ENCODE measurements at regions of chr19 and their contacts with region 1.

Region 1: GRCh38 chr19:38049105-38049649 is 142.2 kb downstream of the SIPA1L3 start:
- DNase-seq: peak; percentile 85
- ATAC-seq: peak; percentile 35
- H3K4me3 ChIP-seq: peak overlapping the region in 4 of 5 experiments; percentile 2 to 39 (median 26)
- H3K4me3 Mint-ChIP-seq: peak overlapping the region; percentile 77
- H3K27ac ChIP-seq: peak overlapping the region; percentile 97
- H3K27ac Mint-ChIP-seq: peak overlapping the region; percentile 96
- H3K4me1 ChIP-seq: peaks cover 52 to 68% of the 10 kb centered on the region in 2 donors
- H3K4me1 Mint-ChIP-seq: peaks cover 75% of the 10 kb centered on the region
- H3K27me3 ChIP-seq: no peaks in the 10 kb centered on the region
- H3K27me3 Mint-ChIP-seq: no peaks in the 10 kb centered on the region
- CTCF ChIP-seq: no peak

Region 2: GRCh38 chr19:37931881-37932655 is 117.1 kb before region 1 on chr19:
- CTCF ChIA-PET with region 1: interaction called, 10 read pairs
- POLR2A ChIA-PET with region 1: interaction called, 10 read pairs
- intact Hi-C with region 1: loop called (anchors 1 kb)
- DNase-seq: peak; percentile 72
- ATAC-seq: peak; percentile 6
- H3K4me3 ChIP-seq: peak overlapping the region; percentile 21 to 63 (median 55)
- H3K4me3 Mint-ChIP-seq: peak overlapping the region; percentile 85
- H3K27ac ChIP-seq: peak overlapping the region; percentile 78 to 85
- H3K27ac Mint-ChIP-seq: peak overlapping the region; percentile 87
- H3K4me1 ChIP-seq: peaks cover 86 to 95% of the 10 kb centered on the region in 2 donors
- H3K4me1 Mint-ChIP-seq: peaks cover 90% of the 10 kb centered on the region
- H3K27me3 ChIP-seq: no peaks in the 10 kb centered on the region
- H3K27me3 Mint-ChIP-seq: no peaks in the 10 kb centered on the region
- CTCF ChIP-seq: no peak

Region 3: DNA sequence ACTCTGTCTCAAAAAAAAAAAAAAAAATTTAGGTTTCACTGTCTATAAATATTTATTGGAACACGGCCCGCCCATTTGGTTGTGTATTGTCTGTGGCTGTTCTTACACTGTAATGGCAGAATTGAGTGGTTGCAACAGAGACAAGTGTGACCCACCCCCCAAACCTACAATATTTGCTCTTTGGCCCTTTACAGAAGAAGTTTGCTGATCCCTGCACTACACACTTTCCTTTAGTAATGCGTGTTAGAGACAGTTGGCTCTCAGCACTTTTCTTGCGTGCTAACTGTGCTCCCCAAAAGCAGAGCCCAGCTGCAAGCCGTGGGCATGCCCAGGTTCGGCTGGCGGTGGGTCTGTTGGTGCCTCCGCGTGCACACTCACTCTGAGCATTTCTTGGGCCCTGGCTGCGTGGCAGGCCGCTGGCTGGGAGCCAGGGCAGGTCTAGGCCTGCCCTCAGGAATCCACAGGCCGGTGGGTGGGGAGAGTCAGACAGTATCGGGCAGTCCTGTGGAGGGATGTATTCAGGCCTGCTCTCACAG is 69.6 kb before region 1 on chr19:
- CTCF ChIA-PET with region 1: interaction called, 27 read pairs
- POLR2A ChIA-PET with region 1: interaction called, 22 read pairs
- intact Hi-C with region 1: loop called (anchors 1 kb)
- DNase-seq: peak; percentile 66
- ATAC-seq: no peak
- H3K4me3 ChIP-seq: peak overlapping the region in 2 of 5 experiments; percentile 19 to 45
- H3K4me3 Mint-ChIP-seq: peak overlapping the region; percentile 65
- H3K27ac ChIP-seq: peak overlapping the region; percentile 89 to 92
- H3K27ac Mint-ChIP-seq: peak overlapping the region; percentile 94
- H3K4me1 ChIP-seq: peaks cover 79 to 99% of the 10 kb centered on the region in 2 donors
- H3K4me1 Mint-ChIP-seq: peaks cover 87% of the 10 kb centered on the region
- H3K27me3 ChIP-seq: no peaks in the 10 kb centered on the region
- H3K27me3 Mint-ChIP-seq: no peaks in the 10 kb centered on the region
- CTCF ChIP-seq: no peak

Region 4: GRCh38 chr19:38033658-38034498 is 15.3 kb before region 1 on chr19:
- CTCF ChIA-PET with region 1: interaction called, 109 read pairs
- POLR2A ChIA-PET with region 1: interaction called, 91 read pairs
- intact Hi-C with region 1: loop called (anchors 1 kb)
- DNase-seq: peak; percentile 93
- ATAC-seq: peak; percentile 79
- H3K4me3 ChIP-seq: peak overlapping the region in 3 of 5 experiments; percentile 16 to 43 (median 36)
- H3K4me3 Mint-ChIP-seq: peak overlapping the region; percentile 86
- H3K27ac ChIP-seq: peak overlapping the region; percentile 84 to 93
- H3K27ac Mint-ChIP-seq: peak overlapping the region; percentile 99
- H3K4me1 ChIP-seq: peaks cover 63 to 87% of the 10 kb centered on the region in 2 donors
- H3K4me1 Mint-ChIP-seq: peaks cover 81% of the 10 kb centered on the region
- H3K27me3 ChIP-seq: no peaks in the 10 kb centered on the region
- H3K27me3 Mint-ChIP-seq: no peaks in the 10 kb centered on the region
- CTCF ChIP-seq: peak; percentile 65

Region 5: DNA sequence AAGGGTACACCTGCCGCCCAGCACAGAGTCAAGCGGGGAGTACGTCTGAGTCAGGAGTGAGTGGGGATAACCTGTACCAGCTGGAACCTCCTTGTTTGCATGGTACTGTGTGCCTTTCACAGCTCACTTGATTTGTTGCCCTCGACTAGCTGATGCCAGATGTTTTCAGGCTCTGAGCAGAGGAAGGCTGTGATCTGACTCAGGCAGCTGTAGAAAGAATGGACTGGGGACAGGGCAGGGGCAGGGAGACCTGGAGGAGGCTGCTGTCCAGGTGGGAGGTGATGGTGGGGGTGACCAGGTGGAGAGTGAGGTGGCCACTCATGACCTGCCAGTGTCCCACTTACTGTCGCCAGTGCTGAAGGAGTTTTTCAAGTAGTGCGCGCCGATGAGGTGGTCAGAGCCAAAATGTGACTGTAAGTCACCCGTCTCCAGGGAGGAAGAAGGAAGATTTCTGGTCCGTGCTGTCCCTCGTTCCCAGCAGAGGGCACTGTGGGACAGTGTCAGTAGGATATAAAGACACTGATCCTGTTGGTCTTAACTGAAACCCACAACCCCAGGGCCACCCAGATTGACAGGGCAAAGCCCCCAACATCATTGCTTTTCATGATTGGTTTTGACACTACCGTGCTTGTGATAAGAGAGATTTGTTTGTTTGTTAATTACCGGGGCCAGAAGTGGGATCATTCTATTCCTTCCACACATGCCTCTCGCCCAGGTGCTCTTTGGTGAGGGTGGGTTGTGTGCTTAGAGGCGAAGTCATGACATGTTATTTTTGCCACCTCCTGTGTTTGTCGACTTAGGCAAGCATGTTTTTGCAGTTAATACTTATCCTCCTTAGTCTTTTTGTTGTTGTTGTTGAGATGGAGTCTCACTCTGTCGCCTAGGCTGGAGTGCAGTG is 46.5 kb after region 1 on chr19:
- CTCF ChIA-PET with region 1: interaction called, 17 read pairs
- POLR2A ChIA-PET with region 1: interaction called, 5 read pairs
- intact Hi-C with region 1: loop called (anchors 5 kb)
- DNase-seq: peak; percentile 78
- ATAC-seq: peak; percentile 81
- H3K4me3 ChIP-seq: no peak overlapping the region
- H3K4me3 Mint-ChIP-seq: peak overlapping the region; percentile 11
- H3K27ac ChIP-seq: peak overlapping the region; percentile 18 to 69
- H3K27ac Mint-ChIP-seq: peak overlapping the region; percentile 90
- H3K4me1 ChIP-seq: peaks cover 7 to 12% of the 10 kb centered on the region in 2 donors
- H3K4me1 Mint-ChIP-seq: peaks cover 21% of the 10 kb centered on the region
- H3K27me3 ChIP-seq: no peaks in the 10 kb centered on the region
- H3K27me3 Mint-ChIP-seq: no peaks in the 10 kb centered on the region
- CTCF ChIP-seq: peak; percentile 73

Region 6: DNA sequence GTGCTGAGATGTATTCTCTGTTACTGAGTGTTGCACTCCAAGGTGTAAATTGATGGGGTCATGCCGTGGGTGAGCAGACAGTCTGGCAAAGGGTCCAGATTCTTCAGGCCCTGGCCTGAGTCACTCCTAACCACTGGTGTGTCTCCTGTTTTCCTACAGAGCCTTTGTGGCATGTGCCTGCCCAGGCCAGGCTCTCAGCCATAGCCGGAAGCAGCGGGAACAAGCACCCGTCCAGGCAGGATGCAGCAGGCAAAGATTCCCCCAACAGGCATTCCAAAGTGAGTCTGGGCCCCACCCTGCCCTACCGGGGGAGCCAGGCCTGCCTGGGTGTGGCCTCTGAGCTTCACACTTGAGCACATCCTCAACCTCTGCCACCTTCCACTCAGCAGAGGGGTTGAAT is 112.9 kb after region 1 on chr19:
- CTCF ChIA-PET with region 1: no interaction called
- POLR2A ChIA-PET with region 1: no interaction called
- intact Hi-C with region 1: no loop called
- DNase-seq: no peak
- ATAC-seq: no peak
- H3K4me3 ChIP-seq: no peak overlapping the region
- H3K4me3 Mint-ChIP-seq: no peak overlapping the region
- H3K27ac ChIP-seq: no peak overlapping the region
- H3K27ac Mint-ChIP-seq: no peak overlapping the region
- H3K4me1 ChIP-seq: no peaks in the 10 kb centered on the region
- H3K4me1 Mint-ChIP-seq: no peaks in the 10 kb centered on the region
- H3K27me3 ChIP-seq: no peaks in the 10 kb centered on the region
- H3K27me3 Mint-ChIP-seq: no peaks in the 10 kb centered on the region
- CTCF ChIP-seq: no peak

Region 7: DNA sequence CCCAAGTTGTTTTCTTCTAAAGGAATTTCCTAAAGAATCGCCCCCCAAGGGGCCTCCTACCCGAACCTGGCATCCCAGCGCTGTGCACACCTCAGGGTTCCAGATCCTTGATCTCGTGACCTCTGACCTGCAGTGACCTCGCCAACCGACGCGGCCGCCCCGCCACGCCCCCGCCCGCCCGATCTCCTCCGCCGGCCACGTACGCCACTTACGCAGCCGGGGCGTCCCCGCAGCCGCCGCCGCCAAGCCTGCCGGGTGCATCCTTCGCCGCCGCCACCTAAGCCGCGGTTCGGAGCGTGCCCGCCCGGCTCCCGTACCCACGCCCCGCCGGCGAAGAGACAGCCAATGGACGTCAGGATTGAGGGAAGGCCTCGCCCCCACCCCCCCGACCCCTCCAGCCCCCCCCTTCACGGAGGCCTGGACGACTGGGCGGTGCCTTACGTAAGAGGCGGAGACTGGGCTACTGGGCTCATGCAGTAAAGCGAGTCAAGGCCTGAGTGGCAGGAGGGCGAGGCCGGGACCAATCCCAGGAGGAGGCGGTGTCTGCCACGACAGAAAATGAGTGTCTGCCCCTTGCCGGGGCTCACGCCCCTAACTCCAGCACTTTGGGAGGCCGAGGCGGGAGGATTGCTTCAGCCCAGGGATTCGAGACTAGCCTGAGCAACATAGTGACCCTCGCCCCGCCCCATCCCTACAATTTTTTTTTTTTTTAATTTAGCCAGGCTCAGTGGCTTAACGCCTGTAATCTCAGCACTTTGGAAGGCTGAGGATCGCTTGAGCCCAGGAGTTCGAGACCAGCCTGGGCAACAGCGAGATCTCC is 266.7 kb after region 1 on chr19 and contains the start of gene YIF1B:
- CTCF ChIA-PET with region 1: no interaction called
- POLR2A ChIA-PET with region 1: no interaction called
- intact Hi-C with region 1: loop called (anchors 2 kb)
- DNase-seq: peak; percentile 96
- ATAC-seq: peak; percentile 91
- H3K4me3 ChIP-seq: peak within 1 kb of the TSS; percentile 62 to 90 (median 70)
- H3K4me3 Mint-ChIP-seq: peak within 1 kb of the TSS; percentile 96
- H3K27ac ChIP-seq: peak within 1 kb of the TSS; percentile 85 to 91
- H3K27ac Mint-ChIP-seq: peak within 1 kb of the TSS; percentile 96
- H3K4me1 ChIP-seq: peaks cover 29 to 47% of the 10 kb centered on the region in 2 donors
- H3K4me1 Mint-ChIP-seq: peaks cover 47% of the 10 kb centered on the region
- H3K27me3 ChIP-seq: peaks cover 0 to 2% (median 0%) of the 10 kb centered on the region in 4 experiments
- H3K27me3 Mint-ChIP-seq: no peaks in the 10 kb centered on the region
- CTCF ChIP-seq: no peak
- total RNA-seq, gene YIF1B: 30.6 and 31.6 TPM in 2 replicates

Measured in B cell (primary cell).